Activated T-helper 2 cell treated with anti-CD3 and anti-CD28 coated beads, Interferon-gamma antibody, Interleukin-2, Interleukin-4, amounts not matched to agents 10 μg/mL and 5 μg/mL and 100 μg/mL, durations not matched to agents 14 hours and 24 hours and 36 hours (primary cell): ENCODE measurements at regions of chr4 and their contacts with region 1.

Region 1: GRCh38 chr4:40579983-40580382 is 49.7 kb downstream of the RBM47 start:
- DNase-seq: no peak
- H3K4me3 Mint-ChIP-seq: no peak overlapping the region
- H3K27ac Mint-ChIP-seq: peak overlapping the region; percentile 38
- H3K4me1 Mint-ChIP-seq: peaks cover 56% of the 10 kb centered on the region
- H3K27me3 Mint-ChIP-seq: peaks cover 1% of the 10 kb centered on the region

Region 2: GRCh38 chr4:40369437-40370274 is 210.3 kb before region 1 on chr4:
- intact Hi-C with region 1: no loop called
- DNase-seq: no peak
- H3K4me3 Mint-ChIP-seq: no peak overlapping the region
- H3K27ac Mint-ChIP-seq: no peak overlapping the region
- H3K4me1 Mint-ChIP-seq: peaks cover 4% of the 10 kb centered on the region
- H3K27me3 Mint-ChIP-seq: peaks cover 6% of the 10 kb centered on the region

Region 3: DNA sequence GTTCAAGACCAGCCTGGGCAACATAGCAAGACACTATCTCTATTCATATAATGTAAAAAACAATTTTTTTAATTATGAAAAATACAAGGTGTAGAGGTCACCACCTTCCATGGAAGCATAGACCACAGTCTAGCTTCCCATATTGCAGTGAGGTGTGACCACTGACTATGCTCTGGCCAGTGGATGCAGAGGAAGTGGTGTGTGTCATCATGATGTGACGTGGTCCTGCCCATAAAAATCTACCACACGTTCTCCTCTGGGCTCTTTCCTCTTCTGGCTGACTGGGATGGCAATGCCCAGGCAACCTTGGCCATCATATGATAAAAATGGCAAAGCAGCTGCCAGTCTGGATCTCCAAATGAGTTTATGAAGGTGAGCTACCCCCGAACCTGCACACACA is 16.0 kb before region 1 on chr4:
- intact Hi-C with region 1: loop called (anchors 2 kb)
- DNase-seq: no peak
- H3K4me3 Mint-ChIP-seq: no peak overlapping the region
- H3K27ac Mint-ChIP-seq: no peak overlapping the region
- H3K4me1 Mint-ChIP-seq: peaks cover 43% of the 10 kb centered on the region
- H3K27me3 Mint-ChIP-seq: no peaks in the 10 kb centered on the region

Region 4: DNA sequence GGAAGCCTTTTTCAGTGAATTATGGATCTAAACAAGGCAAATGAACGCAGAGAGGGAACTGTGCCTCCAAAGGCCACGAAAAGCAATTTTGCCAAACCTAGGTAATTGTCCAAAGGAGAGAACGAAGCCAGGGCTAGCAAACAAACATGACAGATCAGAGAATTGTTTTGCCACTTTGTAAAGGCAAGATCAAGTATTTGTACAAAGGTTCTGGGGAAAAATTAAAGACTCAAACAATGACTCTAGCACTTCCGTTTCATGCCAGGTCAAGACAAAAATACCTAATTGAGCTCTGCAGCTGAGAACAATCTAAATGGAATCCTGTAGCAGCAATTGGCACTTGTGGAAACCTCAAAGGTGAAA is 41.2 kb after region 1 on chr4:
- intact Hi-C with region 1: loop called (anchors 1 kb)
- DNase-seq: no peak
- H3K4me3 Mint-ChIP-seq: no peak overlapping the region
- H3K27ac Mint-ChIP-seq: peak overlapping the region; percentile 42
- H3K4me1 Mint-ChIP-seq: peaks cover 47% of the 10 kb centered on the region
- H3K27me3 Mint-ChIP-seq: no peaks in the 10 kb centered on the region

Region 5: DNA sequence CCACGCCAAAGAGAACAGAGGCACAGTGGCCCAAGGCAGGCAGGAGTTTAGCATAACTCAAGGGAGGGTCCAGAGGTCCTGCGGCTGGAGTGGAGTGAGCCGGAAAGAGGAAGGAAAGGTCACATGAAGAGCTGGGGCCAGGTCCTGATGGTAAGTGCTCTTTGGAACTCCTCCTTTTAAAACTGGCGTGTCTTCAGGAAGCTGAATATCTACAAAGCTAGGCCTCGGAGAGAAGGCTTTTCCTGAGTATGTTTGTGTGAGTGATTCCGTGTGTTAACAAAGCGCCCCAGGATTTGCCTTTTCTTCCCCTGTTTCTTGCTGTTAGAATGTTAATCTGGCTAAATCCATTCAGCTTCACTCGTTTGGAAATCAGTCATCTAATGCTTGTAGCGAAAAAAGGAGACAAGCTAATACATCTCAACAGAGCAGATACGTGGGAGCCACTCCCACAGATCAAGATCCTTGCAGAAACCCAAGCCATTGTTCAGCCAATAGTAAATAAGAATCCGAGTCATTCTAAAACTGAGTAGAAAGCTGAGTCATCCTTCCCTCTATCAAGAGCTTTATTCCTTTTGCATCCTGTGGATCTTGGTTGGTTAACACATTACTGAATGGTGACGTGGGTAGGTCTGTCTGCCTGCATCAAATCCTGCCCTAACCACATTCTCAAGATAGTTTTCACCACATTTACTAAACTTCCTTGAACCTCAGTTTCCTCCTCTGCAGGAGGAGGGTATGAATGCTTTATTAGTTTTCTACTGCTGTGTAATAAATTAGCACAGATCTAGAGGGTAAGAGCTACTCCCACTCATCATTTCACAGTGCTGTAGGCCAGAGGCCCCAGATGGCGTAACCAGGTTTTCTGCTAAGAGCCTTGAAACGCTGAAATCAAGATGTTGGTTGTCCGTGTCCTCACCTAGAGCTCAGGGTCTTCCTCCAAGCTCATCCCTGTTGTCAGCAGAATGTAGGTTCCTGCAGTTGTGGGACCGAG is 92.8 kb after region 1 on chr4:
- intact Hi-C with region 1: loop called (anchors 1 kb)
- DNase-seq: peak; percentile 63
- H3K4me3 Mint-ChIP-seq: peak overlapping the region; percentile 51
- H3K27ac Mint-ChIP-seq: peak overlapping the region; percentile 90
- H3K4me1 Mint-ChIP-seq: peaks cover 53% of the 10 kb centered on the region
- H3K27me3 Mint-ChIP-seq: no peaks in the 10 kb centered on the region